WTC11 (cell line): ENCODE measurements at regions of chr19 and their contacts with region 1.

Region 1: GRCh38 chr19:44570984-44571684 is 41.7 kb upstream of the CEACAM20 start:
- DNase-seq: peak; percentile 76
- ATAC-seq: peak; percentile 74
- H3K4me3 Mint-ChIP-seq: no peak overlapping the region
- H3K27ac Mint-ChIP-seq: no peak overlapping the region
- H3K4me1 Mint-ChIP-seq: peaks cover 12% of the 10 kb centered on the region
- H3K27me3 Mint-ChIP-seq: no peaks in the 10 kb centered on the region; the same call in none of the 2 replicates
- CTCF ChIP-seq: peak; percentile 70; the same call in 1 of the 2 replicates

Region 2: GRCh38 chr19:44582581-44583265 is 11.6 kb after region 1 on chr19:
- CTCF ChIA-PET with region 1: interaction called, 79 read pairs
- POLR2A ChIA-PET with region 1: no interaction called
- DNase-seq: peak; percentile 86
- ATAC-seq: peak; percentile 93
- H3K4me3 Mint-ChIP-seq: no peak overlapping the region
- H3K27ac Mint-ChIP-seq: no peak overlapping the region
- H3K4me1 Mint-ChIP-seq: peaks cover 3% of the 10 kb centered on the region
- H3K27me3 Mint-ChIP-seq: peaks cover 15% of the 10 kb centered on the region
- CTCF ChIP-seq: peak; percentile 85

Region 3: DNA sequence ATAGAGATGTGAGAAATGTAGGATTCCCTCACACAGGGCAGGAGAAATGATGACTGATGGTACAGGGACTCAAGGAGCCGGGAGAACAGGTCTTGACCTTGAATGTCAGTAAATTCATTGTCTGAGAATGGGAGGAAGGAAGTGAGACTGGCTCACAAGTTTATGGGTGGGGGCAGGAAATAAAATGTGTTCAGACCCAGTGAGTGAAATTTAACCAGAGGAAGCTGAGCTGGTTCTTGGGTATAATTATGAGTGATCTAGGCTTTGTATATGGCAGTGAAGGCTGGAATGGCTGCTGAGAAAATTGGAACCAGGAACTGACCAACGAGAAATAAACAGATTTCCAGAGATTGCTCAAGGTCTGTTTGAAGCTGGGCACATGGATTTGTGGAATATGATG is 35.9 kb after region 1 on chr19:
- CTCF ChIA-PET with region 1: interaction called, 27 read pairs
- POLR2A ChIA-PET with region 1: no interaction called
- DNase-seq: no peak
- ATAC-seq: no peak
- H3K4me3 Mint-ChIP-seq: no peak overlapping the region
- H3K27ac Mint-ChIP-seq: no peak overlapping the region
- H3K4me1 Mint-ChIP-seq: peaks cover 51% of the 10 kb centered on the region
- H3K27me3 Mint-ChIP-seq: no peaks in the 10 kb centered on the region; the same call in 1 of the 2 replicates
- CTCF ChIP-seq: no peak

Region 4: DNA sequence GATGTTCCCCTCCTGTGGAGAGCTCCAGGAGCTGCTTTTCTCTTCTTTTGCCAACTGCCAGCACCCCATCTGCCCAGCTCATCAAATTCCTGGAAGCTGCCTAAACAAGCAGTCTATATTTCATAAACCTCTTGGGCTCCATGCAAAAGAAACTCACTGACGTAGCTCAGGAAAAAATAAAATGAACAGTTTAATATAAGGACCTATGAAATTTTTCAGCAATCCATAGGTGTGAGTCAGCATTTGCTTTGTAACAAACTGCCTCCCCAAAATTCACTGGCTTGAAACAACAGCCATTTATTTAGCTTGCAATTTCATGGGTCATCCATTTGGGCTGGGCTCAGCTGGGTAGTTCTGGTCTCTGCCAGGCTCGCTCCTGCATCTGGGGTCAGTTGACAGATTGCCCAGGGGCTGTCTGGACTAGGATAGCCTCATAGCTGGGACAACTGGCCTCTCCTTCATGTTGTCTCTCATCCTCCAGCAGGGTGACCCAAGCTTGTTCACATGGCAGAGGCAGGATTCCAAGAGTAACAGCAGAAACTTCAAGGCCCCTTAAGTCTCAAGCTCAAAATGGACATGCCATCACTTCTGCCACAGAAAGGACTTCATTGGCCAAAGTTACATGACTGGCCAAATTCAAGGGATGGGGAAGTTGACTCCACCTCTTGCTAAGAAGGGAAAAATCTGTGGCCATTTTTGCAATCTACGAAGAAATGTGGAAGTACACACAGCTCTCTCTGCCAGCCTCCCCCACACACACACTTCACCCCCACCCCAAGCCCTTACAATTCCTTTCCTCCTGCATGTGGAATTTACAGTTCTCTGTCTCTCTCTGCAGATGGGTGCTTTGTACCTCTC is 64.7 kb after region 1 on chr19:
- CTCF ChIA-PET with region 1: interaction called, 15 read pairs
- POLR2A ChIA-PET with region 1: no interaction called
- DNase-seq: no peak
- ATAC-seq: no peak
- H3K4me3 Mint-ChIP-seq: no peak overlapping the region
- H3K27ac Mint-ChIP-seq: no peak overlapping the region
- H3K4me1 Mint-ChIP-seq: peaks cover 20% of the 10 kb centered on the region
- H3K27me3 Mint-ChIP-seq: peaks cover 10% of the 10 kb centered on the region; the same call in 1 of the 2 replicates
- CTCF ChIP-seq: no peak

Region 5: GRCh38 chr19:44662691-44663385 is 91.7 kb after region 1 on chr19:
- CTCF ChIA-PET with region 1: interaction called, 50 read pairs
- POLR2A ChIA-PET with region 1: no interaction called
- DNase-seq: no peak
- ATAC-seq: no peak
- H3K4me3 Mint-ChIP-seq: no peak overlapping the region
- H3K27ac Mint-ChIP-seq: no peak overlapping the region
- H3K4me1 Mint-ChIP-seq: peaks cover 13% of the 10 kb centered on the region
- H3K27me3 Mint-ChIP-seq: no peaks in the 10 kb centered on the region
- CTCF ChIP-seq: no peak

Region 6: GRCh38 chr19:44723952-44724319 is 152.8 kb after region 1 on chr19:
- CTCF ChIA-PET with region 1: interaction called, 22 read pairs
- POLR2A ChIA-PET with region 1: no interaction called
- DNase-seq: peak; percentile 89
- ATAC-seq: peak; percentile 86
- H3K4me3 Mint-ChIP-seq: no peak overlapping the region
- H3K27ac Mint-ChIP-seq: no peak overlapping the region
- H3K4me1 Mint-ChIP-seq: peaks cover 26% of the 10 kb centered on the region
- H3K27me3 Mint-ChIP-seq: peaks cover 4% of the 10 kb centered on the region
- CTCF ChIP-seq: peak; percentile 94